Natural killer cell (primary cell): ENCODE measurements at regions of chr3 and their contacts with region 1.

Region 1: DNA sequence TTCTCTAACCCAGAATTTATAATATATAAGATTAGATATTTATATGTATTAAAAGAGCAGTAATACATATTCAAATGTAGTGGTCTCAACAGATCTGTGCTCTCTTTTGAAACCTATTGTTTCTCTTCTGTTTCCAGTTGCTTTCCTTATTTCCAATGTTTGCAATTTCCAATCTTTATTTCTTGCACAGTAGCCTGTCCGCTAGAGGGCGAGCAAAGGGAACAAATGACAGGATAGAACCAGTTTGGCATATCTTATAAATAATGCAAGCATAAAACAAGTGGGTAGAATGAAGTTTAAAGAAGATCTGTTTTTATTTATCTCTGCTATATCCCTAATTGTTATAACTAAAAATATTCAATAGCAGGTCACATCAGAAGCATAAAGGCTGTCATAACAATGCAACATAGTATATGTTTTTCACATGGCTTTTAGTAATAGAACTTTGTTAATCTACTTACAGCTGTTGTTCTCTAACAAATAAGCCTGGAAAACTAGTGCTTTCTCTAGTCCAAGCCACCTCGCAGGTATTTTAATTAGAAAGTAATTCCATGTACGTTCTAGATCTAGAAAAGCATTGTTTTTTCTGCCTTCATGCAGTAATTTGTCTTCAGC is 15.1 kb upstream of the TCAIM start:
- DNase-seq: peak; percentile 24 to 74
- ATAC-seq: peak in 2 of 3 donors; percentile 59 to 66
- H3K4me3 ChIP-seq: no peak overlapping the region
- H3K4me3 Mint-ChIP-seq: no peak overlapping the region
- H3K27ac ChIP-seq: no peak overlapping the region
- H3K27ac Mint-ChIP-seq: no peak overlapping the region
- H3K4me1 ChIP-seq: peaks cover 3% of the 10 kb centered on the region
- H3K4me1 Mint-ChIP-seq: no peaks in the 10 kb centered on the region
- H3K27me3 ChIP-seq: peaks cover 2% of the 10 kb centered on the region
- H3K27me3 Mint-ChIP-seq: peaks cover 11 to 35% of the 10 kb centered on the region in 2 donors
- CTCF ChIP-seq: peak; percentile 84

Region 2: DNA sequence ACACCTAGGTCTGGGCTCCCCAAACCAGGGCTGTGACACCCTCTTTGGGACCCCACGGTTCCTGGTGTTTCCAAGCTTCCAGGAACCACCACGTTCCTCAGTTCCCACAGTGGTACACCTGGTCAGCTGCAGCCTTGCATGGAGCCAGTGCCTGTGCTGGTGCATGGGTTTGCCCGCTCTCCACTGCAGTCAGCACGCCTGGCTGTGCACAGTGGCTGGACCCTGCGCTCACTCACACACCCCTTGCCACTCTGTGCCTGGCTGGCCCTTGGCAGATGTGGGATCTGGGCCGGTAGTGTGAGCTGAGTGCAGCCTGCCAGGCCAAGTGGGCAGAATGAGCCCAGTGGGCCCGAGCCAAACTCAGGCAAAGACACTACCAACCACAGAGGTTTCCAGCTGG is 64.0 kb after region 1 on chr3:
- intact Hi-C with region 1: no loop called
- DNase-seq: no peak
- ATAC-seq: no peak
- H3K4me3 ChIP-seq: no peak overlapping the region
- H3K4me3 Mint-ChIP-seq: no peak overlapping the region
- H3K27ac ChIP-seq: no peak overlapping the region
- H3K27ac Mint-ChIP-seq: no peak overlapping the region
- H3K4me1 ChIP-seq: no peaks in the 10 kb centered on the region
- H3K4me1 Mint-ChIP-seq: peaks cover 0 to 4% of the 10 kb centered on the region in 2 donors
- H3K27me3 ChIP-seq: no peaks in the 10 kb centered on the region
- H3K27me3 Mint-ChIP-seq: no peaks in the 10 kb centered on the region
- CTCF ChIP-seq: no peak

Region 3: DNA sequence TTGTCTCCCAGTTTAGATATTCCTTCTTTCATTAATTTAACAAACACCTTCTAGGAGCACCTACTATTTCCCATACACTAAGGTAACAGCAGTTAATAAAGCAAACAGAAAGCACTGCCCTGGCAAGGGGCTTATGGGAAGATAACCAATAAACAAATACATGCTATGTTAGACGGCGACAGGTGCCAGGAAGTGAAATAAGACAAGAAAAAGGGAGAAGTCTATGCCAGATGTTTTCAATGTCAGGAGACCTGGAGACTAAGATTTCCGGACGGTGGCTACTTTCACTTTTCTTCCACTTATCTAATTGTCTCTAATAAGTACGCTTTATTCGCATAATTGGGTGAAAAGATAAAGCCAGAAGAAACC is 186.5 kb after region 1 on chr3:
- intact Hi-C with region 1: loop called (anchors 5 kb)
- DNase-seq: peak in 1 of 2 donors; percentile 56
- ATAC-seq: peak in 2 of 3 donors; percentile 7 to 10
- H3K4me3 ChIP-seq: peak overlapping the region; percentile 94
- H3K4me3 Mint-ChIP-seq: peak overlapping the region; percentile 93
- H3K27ac ChIP-seq: peak overlapping the region; percentile 75
- H3K27ac Mint-ChIP-seq: peak overlapping the region; percentile 87 to 94
- H3K4me1 ChIP-seq: peaks cover 19% of the 10 kb centered on the region
- H3K4me1 Mint-ChIP-seq: peaks cover 35 to 38% of the 10 kb centered on the region in 2 donors
- H3K27me3 ChIP-seq: no peaks in the 10 kb centered on the region
- H3K27me3 Mint-ChIP-seq: no peaks in the 10 kb centered on the region
- CTCF ChIP-seq: no peak